ENCODE measurements at regions of chr9 and their contacts with region 1.

Region 1: GRCh38 chr9:33721674-33722358 is 73.5 kb upstream of the PRSS3 start:
- DNase-seq: peak; percentile 82 to 86
- H3K4me3 ChIP-seq: no peak overlapping the region
- H3K27ac ChIP-seq: no peak overlapping the region
- H3K4me1 ChIP-seq: no peaks in the 10 kb centered on the region
- H3K27me3 ChIP-seq: no peaks in the 10 kb centered on the region
- CTCF ChIP-seq: peak in 5 of 6 experiments; percentile 99 to 100 (median 100)
- POLR2A ChIP-seq: no peak

Region 2: GRCh38 chr9:33446946-33447798 is 274.6 kb before region 1 on chr9 and contains the start of gene AQP3:
- intact Hi-C with region 1: no loop called
- DNase-seq: peak; percentile 54 to 63
- H3K4me3 ChIP-seq: peak within 1 kb of the TSS in 1 of 3 donors; percentile 30
- H3K27ac ChIP-seq: no peak within 1 kb of the TSS
- H3K4me1 ChIP-seq: peaks cover 3 to 30% of the 10 kb centered on the region in 2 donors
- H3K27me3 ChIP-seq: no peaks in the 10 kb centered on the region
- CTCF ChIP-seq: peak in 3 of 6 experiments; percentile 11 to 47 (median 32)
- POLR2A ChIP-seq: peak in 1 of 2 donors; percentile 19
- total RNA-seq, gene AQP3: 1.0 to 4.3 (median 2.5) TPM

Region 3: GRCh38 chr9:33623658-33624586 is 97.9 kb before region 1 on chr9:
- intact Hi-C with region 1: loop called (anchors 2 kb)
- DNase-seq: peak; percentile 59 to 62
- H3K4me3 ChIP-seq: no peak overlapping the region
- H3K27ac ChIP-seq: no peak overlapping the region
- H3K4me1 ChIP-seq: no peaks in the 10 kb centered on the region
- H3K27me3 ChIP-seq: no peaks in the 10 kb centered on the region
- CTCF ChIP-seq: peak; percentile 64 to 84 (median 81)
- POLR2A ChIP-seq: no peak

Measured in thyroid gland (tissue), 4 donors.